Heart left ventricle (tissue), 16 donors: ENCODE measurements at regions of chr10 and their contacts with region 1.

Region 1: DNA sequence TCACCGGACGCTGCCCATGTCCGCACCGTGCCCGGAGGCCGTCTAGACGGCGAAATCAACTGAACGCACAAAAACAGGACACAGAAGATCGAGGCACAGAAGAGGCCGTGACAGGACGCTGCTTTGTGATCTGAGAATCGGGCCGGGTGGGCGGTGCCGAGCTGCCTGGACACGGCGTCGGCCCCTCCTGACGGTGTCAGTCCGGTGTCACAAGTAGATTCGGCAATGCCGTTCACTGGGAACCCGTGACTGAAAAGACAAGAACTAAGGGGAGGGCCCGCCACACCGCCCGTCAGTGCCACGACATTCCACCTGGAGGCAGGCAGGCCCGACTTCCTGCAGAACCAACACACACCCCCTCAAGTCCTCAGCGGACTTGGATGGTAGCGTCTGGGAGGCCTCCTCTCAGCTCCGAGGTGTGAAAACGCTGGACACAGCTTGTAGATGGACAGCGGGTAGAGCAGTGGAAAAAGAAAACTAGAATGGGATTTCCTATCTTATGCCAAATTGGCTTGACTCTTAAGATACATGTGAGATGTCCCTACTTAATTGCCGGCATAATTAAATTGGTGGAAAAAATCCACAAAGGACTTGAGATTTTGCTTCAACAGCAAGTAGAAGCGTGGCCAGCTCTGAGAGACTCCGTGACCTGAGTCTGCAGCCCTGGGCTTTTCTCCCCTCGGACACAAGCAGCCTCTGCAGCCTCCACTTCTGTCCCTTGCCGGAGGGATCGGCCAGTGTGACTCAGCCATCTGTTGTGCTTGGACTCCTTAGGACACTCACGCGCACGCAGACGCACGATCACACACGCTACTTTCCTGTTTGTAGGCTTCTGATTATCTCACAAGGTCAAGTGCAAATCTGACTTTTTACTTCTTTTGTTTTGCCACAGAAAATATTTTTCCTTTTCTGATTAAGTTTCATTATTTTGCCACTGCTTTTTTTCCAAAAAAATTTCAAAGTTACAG is 269.0 kb downstream of the DIP2C start:
- DNase-seq: no peak
- ATAC-seq: no peak
- H3K4me3 ChIP-seq: no peak overlapping the region
- H3K27ac ChIP-seq: no peak overlapping the region
- H3K4me1 ChIP-seq: no peaks in the 10 kb centered on the region
- H3K27me3 ChIP-seq: no peaks in the 10 kb centered on the region
- CTCF ChIP-seq: no peak
- POLR2A ChIP-seq: no peak

Region 2: GRCh38 chr10:387909-388660 is 32.4 kb before region 1 on chr10:
- intact Hi-C with region 1: loop called in 1 of 10 experiments (anchors 1 kb)
- DNase-seq: peak in 1 of 5 donors; percentile 56
- ATAC-seq: peak in 3 of 4 donors; percentile 40 to 52 (median 43)
- H3K4me3 ChIP-seq: peak overlapping the region in 2 of 12 donors; percentile 3 to 26
- H3K27ac ChIP-seq: peak overlapping the region in 4 of 12 donors; percentile 17 to 72 (median 34)
- H3K4me1 ChIP-seq: peaks cover 0 to 5% (median 0%) of the 10 kb centered on the region in 12 donors
- H3K27me3 ChIP-seq: no peaks in the 10 kb centered on the region
- CTCF ChIP-seq: no peak
- POLR2A ChIP-seq: no peak

Region 3: GRCh38 chr10:404346-404745 is 16.1 kb before region 1 on chr10:
- intact Hi-C with region 1: no loop called
- DNase-seq: no peak
- ATAC-seq: no peak
- H3K4me3 ChIP-seq: no peak overlapping the region
- H3K27ac ChIP-seq: no peak overlapping the region
- H3K4me1 ChIP-seq: peaks cover 0 to 6% (median 0%) of the 10 kb centered on the region in 12 donors
- H3K27me3 ChIP-seq: no peaks in the 10 kb centered on the region
- CTCF ChIP-seq: no peak
- POLR2A ChIP-seq: no peak